ENCODE measurements at regions of chr2 and their contacts with region 1.

Region 1: GRCh38 chr2:74226648-74227213 is 28.3 kb downstream of the MTHFD2 start:
- DNase-seq: no peak
- H3K4me3 ChIP-seq: no peak overlapping the region
- H3K27ac ChIP-seq: no peak overlapping the region
- H3K4me1 ChIP-seq: peaks cover 0 to 3% (median 1%) of the 10 kb centered on the region in 4 experiments; a peak in 3 of 7 replicates
- H3K27me3 ChIP-seq: no peaks in the 10 kb centered on the region
- CTCF ChIP-seq: no peak
- EP300 ChIP-seq: no peak
- POLR2A ChIP-seq: no peak
- RAD21 ChIP-seq: no peak

Region 2: GRCh38 chr2:74206180-74206688 is 20.5 kb before region 1 on chr2:
- CTCF ChIA-PET with region 1: interaction called, 13 read pairs
- POLR2A ChIA-PET with region 1: interaction called, 2,699 read pairs
- DNase-seq: no peak
- H3K4me3 ChIP-seq: no peak overlapping the region
- H3K27ac ChIP-seq: no peak overlapping the region
- H3K4me1 ChIP-seq: peaks cover 2 to 18% (median 14%) of the 10 kb centered on the region in 4 experiments
- H3K27me3 ChIP-seq: no peaks in the 10 kb centered on the region
- CTCF ChIP-seq: no peak
- EP300 ChIP-seq: no peak
- POLR2A ChIP-seq: peak in 1 of 2 experiments; percentile 37; a peak in 2 of 3 replicates
- RAD21 ChIP-seq: no peak

Region 3: GRCh38 chr2:74238879-74239278 is 12.1 kb after region 1 on chr2:
- CTCF ChIA-PET with region 1: interaction called, 5 read pairs
- POLR2A ChIA-PET with region 1: interaction called, 91 read pairs
- DNase-seq: no peak
- H3K4me3 ChIP-seq: no peak overlapping the region
- H3K27ac ChIP-seq: no peak overlapping the region
- H3K4me1 ChIP-seq: no peaks in the 10 kb centered on the region
- H3K27me3 ChIP-seq: no peaks in the 10 kb centered on the region; a peak in 1 of 7 replicates
- CTCF ChIP-seq: no peak
- EP300 ChIP-seq: no peak
- POLR2A ChIP-seq: no peak
- RAD21 ChIP-seq: no peak

Measured in H1 (cell line).